ENCODE measurements at regions of chr3 and their contacts with region 1.

Region 1: DNA sequence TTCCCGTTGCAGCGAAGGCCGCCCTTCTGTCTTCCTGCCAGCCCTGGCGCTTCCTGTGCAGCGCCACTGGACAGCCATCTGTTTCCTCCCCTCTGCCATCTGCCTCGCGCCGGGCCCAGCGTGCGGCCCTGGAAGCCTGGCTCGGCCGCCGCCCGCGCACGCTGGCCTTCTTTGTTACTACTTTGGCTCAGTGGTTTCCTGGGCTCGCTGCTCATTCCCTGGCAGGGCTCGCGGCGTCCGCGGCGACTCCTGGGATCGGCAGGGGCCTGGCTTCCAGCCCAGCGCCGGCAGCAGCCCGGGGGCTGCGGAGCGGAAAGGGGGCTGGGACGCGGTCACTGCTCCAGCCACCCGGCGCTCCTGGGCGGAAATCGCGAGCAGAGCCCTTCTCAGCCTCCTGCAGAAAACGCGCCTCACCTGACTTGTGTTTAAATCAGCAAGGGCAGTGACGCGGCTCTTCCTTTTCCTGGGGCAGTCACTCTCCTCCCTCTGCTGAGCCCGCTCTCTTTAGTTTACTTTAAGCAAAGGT is 10.0 kb downstream of the CMTM7 start:
- DNase-seq: peak; percentile 58
- H3K4me3 Mint-ChIP-seq: peak overlapping the region; percentile 92
- H3K27ac Mint-ChIP-seq: peak overlapping the region; percentile 98
- H3K4me1 Mint-ChIP-seq: peaks cover 81% of the 10 kb centered on the region
- H3K27me3 Mint-ChIP-seq: no peaks in the 10 kb centered on the region

Region 2: GRCh38 chr3:32177702-32178198 is 223.9 kb before region 1 on chr3:
- intact Hi-C with region 1: loop called (anchors 1 kb)
- DNase-seq: peak; percentile 37
- H3K4me3 Mint-ChIP-seq: no peak overlapping the region
- H3K27ac Mint-ChIP-seq: no peak overlapping the region
- H3K4me1 Mint-ChIP-seq: peaks cover 12% of the 10 kb centered on the region
- H3K27me3 Mint-ChIP-seq: peaks cover 5% of the 10 kb centered on the region

Region 3: GRCh38 chr3:32374788-32375595 is 26.6 kb before region 1 on chr3:
- intact Hi-C with region 1: loop called (anchors 1 kb)
- DNase-seq: peak; percentile 65
- H3K4me3 Mint-ChIP-seq: no peak overlapping the region
- H3K27ac Mint-ChIP-seq: peak overlapping the region; percentile 36
- H3K4me1 Mint-ChIP-seq: peaks cover 24% of the 10 kb centered on the region
- H3K27me3 Mint-ChIP-seq: no peaks in the 10 kb centered on the region

Region 4: GRCh38 chr3:32420126-32421038 is 18.8 kb after region 1 on chr3:
- intact Hi-C with region 1: loop called (anchors 2 kb)
- DNase-seq: no peak
- H3K4me3 Mint-ChIP-seq: peak overlapping the region; percentile 23
- H3K27ac Mint-ChIP-seq: peak overlapping the region; percentile 61
- H3K4me1 Mint-ChIP-seq: peaks cover 89% of the 10 kb centered on the region
- H3K27me3 Mint-ChIP-seq: no peaks in the 10 kb centered on the region

Region 5: GRCh38 chr3:32428092-32429068 is 26.8 kb after region 1 on chr3:
- intact Hi-C with region 1: loop called (anchors 1 kb)
- DNase-seq: no peak
- H3K4me3 Mint-ChIP-seq: peak overlapping the region; percentile 63
- H3K27ac Mint-ChIP-seq: peak overlapping the region; percentile 87
- H3K4me1 Mint-ChIP-seq: peaks cover 88% of the 10 kb centered on the region
- H3K27me3 Mint-ChIP-seq: no peaks in the 10 kb centered on the region

Region 6: GRCh38 chr3:32460031-32460749 is 58.6 kb after region 1 on chr3:
- intact Hi-C with region 1: loop called (anchors 2 kb)
- DNase-seq: peak; percentile 79
- H3K4me3 Mint-ChIP-seq: peak overlapping the region; percentile 72
- H3K27ac Mint-ChIP-seq: peak overlapping the region; percentile 92
- H3K4me1 Mint-ChIP-seq: peaks cover 26% of the 10 kb centered on the region
- H3K27me3 Mint-ChIP-seq: no peaks in the 10 kb centered on the region

Region 7: GRCh38 chr3:32467333-32468070 is 65.9 kb after region 1 on chr3:
- intact Hi-C with region 1: loop called (anchors 1 kb)
- DNase-seq: peak; percentile 68
- H3K4me3 Mint-ChIP-seq: no peak overlapping the region
- H3K27ac Mint-ChIP-seq: no peak overlapping the region
- H3K4me1 Mint-ChIP-seq: peaks cover 54% of the 10 kb centered on the region
- H3K27me3 Mint-ChIP-seq: no peaks in the 10 kb centered on the region

Region 8: DNA sequence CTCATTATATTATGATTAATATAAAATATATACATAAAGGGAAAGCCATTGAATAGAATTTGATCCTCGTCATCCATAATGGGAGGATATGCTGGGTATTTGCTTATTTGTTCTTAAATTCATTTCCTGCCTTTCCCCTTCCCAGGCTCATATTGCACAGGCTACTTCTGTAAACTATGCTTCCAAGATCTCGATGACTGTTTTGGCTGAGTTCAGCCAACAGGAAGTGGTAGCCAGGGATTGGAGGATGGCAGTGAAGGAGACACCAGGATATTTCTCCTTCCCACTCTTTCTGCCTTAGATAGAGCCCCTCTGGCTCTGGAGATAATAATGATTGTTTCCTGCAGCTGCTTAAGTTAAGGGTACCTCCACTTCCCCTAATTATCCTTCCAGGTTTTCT is 213.3 kb after region 1 on chr3:
- intact Hi-C with region 1: no loop called
- DNase-seq: no peak
- H3K4me3 Mint-ChIP-seq: no peak overlapping the region
- H3K27ac Mint-ChIP-seq: no peak overlapping the region
- H3K4me1 Mint-ChIP-seq: no peaks in the 10 kb centered on the region
- H3K27me3 Mint-ChIP-seq: peaks cover 22% of the 10 kb centered on the region